AG04449 (cell line): ENCODE measurements at regions of chr1 and their contacts with region 1.

Region 1: DNA sequence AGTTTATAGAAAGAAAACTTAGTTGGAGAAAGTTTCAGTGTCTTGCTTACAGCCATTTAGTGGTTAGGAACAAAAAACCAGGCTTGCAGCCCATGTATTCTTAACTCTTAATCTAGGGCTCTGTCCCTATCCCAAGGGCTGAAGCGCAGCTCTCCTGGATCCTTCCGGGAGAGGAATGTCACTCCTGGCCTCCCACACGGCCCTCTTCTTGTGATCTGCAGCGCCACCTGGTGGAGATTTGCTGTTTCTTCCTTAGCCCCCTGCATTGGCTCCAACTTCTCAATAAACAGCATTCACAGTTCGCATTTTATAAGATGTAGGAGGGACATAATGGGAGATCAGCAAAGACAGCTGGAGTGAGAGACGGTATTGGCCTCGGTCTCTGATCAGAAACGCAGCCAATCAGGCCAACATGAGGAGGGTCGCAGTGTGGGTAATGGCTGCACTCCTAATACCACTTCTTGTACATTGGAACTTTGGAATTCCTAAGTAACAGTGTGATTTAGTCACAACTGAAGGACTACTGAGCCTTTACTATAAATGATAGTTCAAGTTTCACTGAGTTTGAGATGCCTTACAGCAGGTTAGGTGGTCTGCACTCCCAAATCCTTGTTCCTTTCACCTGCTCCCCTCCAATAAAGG is 283.4 kb downstream of the ASTN1 start:
- DNase-seq: no peak
- H3K4me3 ChIP-seq: no peak overlapping the region
- CTCF ChIP-seq: peak; percentile 80

Region 2: GRCh38 chr1:176374967-176375569 is 506.0 kb before region 1 on chr1:
- CTCF ChIA-PET with region 1: interaction called, 10 read pairs
- POLR2A ChIA-PET with region 1: no interaction called
- DNase-seq: peak; percentile 33
- H3K4me3 ChIP-seq: no peak overlapping the region
- CTCF ChIP-seq: peak; percentile 89

Region 3: DNA sequence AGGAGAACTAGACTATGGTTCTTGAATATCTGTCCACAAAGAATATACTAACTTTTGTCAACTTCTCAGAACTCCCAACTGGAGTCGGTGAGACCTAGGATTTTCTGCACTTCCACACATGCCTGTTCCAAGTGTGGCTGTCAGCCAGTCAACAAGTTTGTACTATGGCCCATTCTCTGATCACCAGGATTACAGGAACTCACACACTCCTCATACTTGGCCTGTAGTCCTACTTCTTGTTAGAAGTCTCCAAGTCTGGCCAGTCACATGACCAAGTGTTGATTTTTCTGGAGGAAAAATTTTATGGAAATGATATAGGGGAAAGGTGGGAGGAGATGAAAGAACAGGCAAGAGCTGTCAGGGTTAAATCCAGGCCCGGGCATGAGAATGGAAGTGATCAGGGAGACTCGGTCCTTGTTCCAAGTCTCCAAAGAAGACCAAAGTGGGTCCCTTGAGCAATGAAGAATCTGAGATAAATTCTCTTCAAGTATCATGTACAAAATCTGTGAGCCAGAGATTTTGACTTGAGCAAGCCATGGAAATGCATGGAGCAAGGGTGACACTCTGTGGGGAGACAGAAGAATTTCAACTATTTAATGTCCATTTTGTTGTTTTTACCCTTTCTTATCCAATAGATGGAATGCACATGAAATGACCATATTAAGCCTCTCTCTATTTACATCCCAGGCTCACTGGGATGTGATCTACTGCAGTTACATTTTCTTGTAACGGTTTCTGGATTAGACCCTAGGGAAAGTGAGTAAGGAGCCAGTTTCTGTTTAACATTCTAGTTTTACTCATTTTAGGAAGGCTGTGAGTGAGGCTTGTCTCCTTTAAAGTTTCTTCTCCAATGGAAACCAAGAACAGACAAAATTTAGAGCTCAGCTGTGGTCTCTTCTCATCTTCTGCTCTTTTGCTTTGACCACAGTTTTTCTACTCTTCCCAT is 37.5 kb before region 1 on chr1:
- CTCF ChIA-PET with region 1: no interaction called
- POLR2A ChIA-PET with region 1: no interaction called
- DNase-seq: peak; percentile 26
- H3K4me3 ChIP-seq: no peak overlapping the region
- CTCF ChIP-seq: peak; percentile 39

Region 4: GRCh38 chr1:176854758-176855745 is 26.0 kb before region 1 on chr1:
- CTCF ChIA-PET with region 1: no interaction called
- POLR2A ChIA-PET with region 1: no interaction called
- DNase-seq: no peak
- H3K4me3 ChIP-seq: no peak overlapping the region
- CTCF ChIP-seq: no peak

Region 5: GRCh38 chr1:176866011-176866714 is 14.9 kb before region 1 on chr1:
- CTCF ChIA-PET with region 1: interaction called, 15 read pairs
- POLR2A ChIA-PET with region 1: no interaction called
- DNase-seq: no peak
- H3K4me3 ChIP-seq: no peak overlapping the region
- CTCF ChIP-seq: no peak